A549 (cell line): ENCODE measurements at regions of chr10 and their contacts with region 1.

Region 1: GRCh38 chr10:33008499-33009243 is 50.6 kb upstream of the ITGB1 start:
- DNase-seq: peak in 1 of 2 experiments; percentile 94
- ATAC-seq: peak; percentile 7 to 21; a peak in 5 of 6 replicates
- H3K4me3 ChIP-seq: no peak overlapping the region
- H3K27ac ChIP-seq: peak overlapping the region; percentile 98 to 99
- H3K4me1 ChIP-seq: peaks cover 73% of the 10 kb centered on the region
- CTCF ChIP-seq: peak; percentile 98
- EP300 ChIP-seq: peak; percentile 76 to 77; a peak in 2 of 5 replicates
- POLR2A ChIP-seq: no peak
- RAD21 ChIP-seq: peak; percentile 99

Region 2: DNA sequence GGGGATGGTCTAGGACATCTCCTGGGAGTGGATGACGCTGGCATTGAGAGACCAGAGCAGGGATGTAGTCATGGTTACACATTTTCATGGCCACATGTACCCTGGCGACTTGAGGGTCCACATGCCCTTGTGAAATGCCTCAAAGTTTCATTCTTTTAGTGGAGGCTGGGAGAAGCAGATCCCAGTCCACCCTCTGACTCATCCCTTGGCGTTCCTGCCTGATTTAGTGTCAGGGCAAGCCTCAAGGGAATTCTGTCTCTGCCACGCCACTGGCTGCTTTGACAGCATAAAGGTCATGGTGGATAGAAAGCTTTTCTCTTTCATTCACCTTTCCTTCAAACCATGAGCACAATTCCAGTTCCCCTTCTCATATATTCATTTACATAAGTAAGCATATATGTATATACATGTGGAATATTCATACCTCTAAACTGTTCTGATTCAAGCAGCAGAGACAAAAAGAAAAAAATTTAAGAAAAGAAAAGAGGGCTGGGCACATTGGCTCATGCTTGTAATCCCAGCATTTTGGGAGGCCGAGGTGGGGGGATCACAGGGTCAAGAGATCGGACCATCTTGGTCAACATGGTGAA is 930.7 kb before region 1 on chr10:
- CTCF ChIA-PET with region 1: no interaction called
- POLR2A ChIA-PET with region 1: no interaction called
- DNase-seq: peak in 1 of 2 experiments; percentile 28
- ATAC-seq: peak; percentile 78 to 80; a peak in 5 of 6 replicates
- H3K4me3 ChIP-seq: no peak overlapping the region
- H3K27ac ChIP-seq: peak overlapping the region in 1 of 2 experiments; percentile 25; a peak in 2 of 6 replicates
- H3K4me1 ChIP-seq: peaks cover 13% of the 10 kb centered on the region
- CTCF ChIP-seq: no peak
- EP300 ChIP-seq: no peak
- POLR2A ChIP-seq: no peak
- RAD21 ChIP-seq: no peak

Region 3: DNA sequence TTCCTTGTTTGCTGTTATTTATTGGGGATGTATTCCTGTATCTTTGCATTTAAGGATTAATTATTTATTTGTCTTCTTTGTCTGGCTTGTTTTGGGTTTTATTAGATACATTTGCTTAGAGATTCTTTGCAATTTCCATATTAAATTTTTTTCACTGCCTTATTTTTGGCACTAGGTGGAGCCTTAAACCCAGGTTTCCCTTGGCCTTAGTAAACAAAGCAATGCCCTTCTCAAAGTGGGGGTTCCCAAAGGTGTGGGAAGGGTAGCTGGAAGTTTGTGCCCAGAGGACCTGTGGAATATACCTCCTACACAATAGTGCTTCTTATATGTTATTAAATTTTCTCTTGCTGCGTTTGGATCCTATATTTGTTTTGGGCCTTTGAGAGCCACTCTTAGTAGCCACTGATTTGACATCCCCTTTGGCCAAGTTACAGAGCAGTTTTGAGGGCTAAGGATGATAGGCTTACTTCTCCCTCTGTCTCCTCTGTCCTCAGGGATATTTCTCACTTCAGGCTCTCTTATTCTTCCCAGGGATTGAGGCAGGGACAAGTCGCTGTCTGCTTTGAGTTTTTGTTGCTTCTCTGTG is 213.0 kb before region 1 on chr10:
- CTCF ChIA-PET with region 1: interaction called, 23 read pairs
- POLR2A ChIA-PET with region 1: no interaction called
- DNase-seq: peak; percentile 24 to 45
- ATAC-seq: peak; percentile 71 to 78
- H3K4me3 ChIP-seq: no peak overlapping the region
- H3K27ac ChIP-seq: peak overlapping the region; percentile 55 to 83
- H3K4me1 ChIP-seq: peaks cover 8% of the 10 kb centered on the region
- CTCF ChIP-seq: peak; percentile 93
- EP300 ChIP-seq: no peak
- POLR2A ChIP-seq: no peak
- RAD21 ChIP-seq: peak; percentile 97 to 99

Region 4: DNA sequence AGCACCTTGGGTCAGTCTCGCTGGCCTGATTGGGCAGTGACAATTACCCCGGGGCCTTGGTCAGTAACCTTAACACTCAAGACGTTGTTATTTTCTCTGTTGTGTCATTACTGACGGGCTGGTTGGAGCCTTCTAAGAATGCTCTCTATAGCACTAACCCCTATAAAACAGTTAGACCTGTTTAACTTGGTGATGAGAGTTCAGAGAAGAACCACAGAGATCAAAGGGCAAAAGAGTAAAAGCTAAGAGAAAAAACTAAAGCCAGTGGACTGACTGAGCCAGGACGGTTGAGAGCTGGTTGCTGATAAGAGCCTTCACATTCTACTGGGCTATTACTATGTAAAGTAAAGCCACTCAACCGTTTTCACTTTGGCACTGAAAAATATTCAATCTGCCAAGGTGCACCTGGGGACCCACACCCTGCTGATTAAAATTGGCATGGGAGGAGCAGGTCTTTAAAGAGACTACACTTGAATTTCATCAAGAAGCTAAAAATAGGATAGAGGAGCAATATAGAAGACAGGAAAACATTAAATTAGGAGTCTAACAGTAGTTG is 37.1 kb before region 1 on chr10:
- CTCF ChIA-PET with region 1: interaction called, 168 read pairs
- POLR2A ChIA-PET with region 1: interaction called, 4 read pairs
- DNase-seq: peak in 1 of 2 experiments; percentile 73
- ATAC-seq: peak; percentile 71 to 79
- H3K4me3 ChIP-seq: no peak overlapping the region; the same call in 2 of the 3 replicates
- H3K27ac ChIP-seq: peak overlapping the region; percentile 89 to 94
- H3K4me1 ChIP-seq: peaks cover 59% of the 10 kb centered on the region
- CTCF ChIP-seq: no peak
- EP300 ChIP-seq: no peak
- POLR2A ChIP-seq: no peak
- RAD21 ChIP-seq: no peak

Region 5: DNA sequence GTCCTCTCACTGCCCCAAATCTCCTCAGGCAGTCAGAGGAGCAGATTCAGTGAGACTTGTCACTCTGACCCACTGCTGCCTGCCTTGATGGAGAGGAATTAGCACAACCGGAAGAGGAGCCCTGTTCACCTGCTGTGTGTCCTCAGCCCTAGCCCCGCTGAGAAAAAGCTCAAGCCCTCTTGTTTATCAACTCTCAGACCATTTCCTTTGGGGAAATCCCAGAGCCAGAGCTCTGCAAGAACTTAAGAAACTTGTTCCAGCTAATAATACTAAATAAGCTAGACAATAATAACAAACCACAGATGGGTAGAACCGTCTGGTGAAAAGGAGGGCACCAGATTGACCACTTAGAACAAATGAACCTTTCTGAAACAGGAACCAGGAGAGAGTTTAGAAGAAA is 12.9 kb before region 1 on chr10:
- CTCF ChIA-PET with region 1: interaction called, 11 read pairs
- POLR2A ChIA-PET with region 1: interaction called, 3 read pairs
- DNase-seq: no peak
- ATAC-seq: peak in 1 of 2 experiments; percentile 23; a peak in 4 of 6 replicates
- H3K4me3 ChIP-seq: no peak overlapping the region
- H3K27ac ChIP-seq: peak overlapping the region; percentile 84 to 99
- H3K4me1 ChIP-seq: peaks cover 53% of the 10 kb centered on the region
- CTCF ChIP-seq: no peak
- EP300 ChIP-seq: no peak
- POLR2A ChIP-seq: no peak
- RAD21 ChIP-seq: no peak

Region 6: DNA sequence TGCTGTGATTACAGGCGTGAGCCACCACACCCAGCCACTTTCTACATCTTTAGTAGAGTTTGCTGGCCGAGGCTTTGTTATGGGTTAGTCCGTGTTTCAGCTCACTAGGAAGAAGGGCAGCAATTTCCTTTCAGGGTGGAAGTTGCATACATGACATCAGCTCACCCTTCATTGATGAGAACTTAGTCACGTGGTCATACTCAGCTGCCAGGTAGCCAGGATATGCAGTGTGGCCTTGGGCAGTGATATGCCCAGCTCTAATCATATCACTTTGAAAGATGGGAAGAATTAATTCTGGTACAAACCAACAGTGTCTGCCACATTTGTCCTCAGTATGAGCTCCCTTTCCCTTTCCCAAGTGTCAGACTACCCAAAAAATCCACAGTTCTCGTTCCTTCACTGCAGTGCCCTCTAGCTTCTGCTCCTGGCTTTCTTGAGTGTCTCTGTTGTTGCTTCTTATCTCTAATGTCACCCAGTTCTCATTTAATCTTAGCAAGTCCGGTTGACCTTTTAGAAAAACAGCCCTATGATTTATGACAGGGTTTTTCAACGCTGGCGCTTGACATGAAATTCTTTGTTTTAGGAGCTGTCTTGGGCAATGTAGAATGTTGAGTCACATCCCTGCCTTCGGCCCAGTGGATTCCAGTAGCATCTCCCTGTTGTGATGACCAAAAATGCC is 58.0 kb after region 1 on chr10:
- CTCF ChIA-PET with region 1: interaction called, 13 read pairs
- POLR2A ChIA-PET with region 1: interaction called, 23 read pairs
- DNase-seq: peak; percentile 29 to 88
- ATAC-seq: peak; percentile 87 to 90
- H3K4me3 ChIP-seq: no peak overlapping the region
- H3K27ac ChIP-seq: peak overlapping the region; percentile 69 to 84
- H3K4me1 ChIP-seq: peaks cover 33% of the 10 kb centered on the region
- CTCF ChIP-seq: peak; percentile 61
- EP300 ChIP-seq: peak; percentile 63 to 90; a peak in 4 of 5 replicates
- POLR2A ChIP-seq: no peak
- RAD21 ChIP-seq: peak; percentile 64 to 65

Region 7: DNA sequence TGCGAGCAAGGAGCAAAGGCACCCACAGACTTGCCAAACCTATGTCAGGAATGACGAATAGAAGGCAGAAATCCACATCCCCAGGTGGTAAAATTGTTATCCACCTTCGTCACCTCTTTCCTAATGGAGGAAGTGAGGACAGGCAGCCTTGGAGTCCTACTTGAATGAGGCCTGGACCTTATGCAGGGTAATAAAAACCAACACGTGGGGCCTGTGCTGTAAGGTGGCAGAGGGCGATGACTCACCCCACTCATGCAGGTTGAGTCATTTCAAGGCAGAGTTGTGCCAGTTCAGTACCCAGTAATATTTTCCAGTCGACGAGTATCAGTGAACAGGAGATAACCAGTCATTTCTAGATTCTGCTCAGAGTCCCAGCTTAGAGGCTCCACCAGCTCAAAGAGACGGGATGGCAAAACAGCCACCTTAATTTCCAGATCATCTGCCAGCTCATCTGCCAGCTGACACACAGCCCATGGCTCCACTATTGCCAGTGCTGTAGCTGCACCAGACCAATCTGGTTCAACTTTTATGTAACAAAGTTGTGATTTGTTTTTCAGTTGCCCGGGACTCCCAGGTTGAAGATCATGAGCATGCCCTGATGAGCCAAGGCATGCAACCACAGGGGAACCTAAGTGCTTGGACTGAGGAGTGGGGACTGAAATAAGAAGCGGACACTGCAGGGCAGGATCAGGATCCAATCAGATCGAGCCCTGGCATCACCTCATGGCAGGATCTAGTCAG is 125.5 kb after region 1 on chr10:
- CTCF ChIA-PET with region 1: interaction called, 82 read pairs
- POLR2A ChIA-PET with region 1: interaction called, 10 read pairs
- DNase-seq: peak; percentile 78 to 97
- ATAC-seq: peak; percentile 83 to 92
- H3K4me3 ChIP-seq: no peak overlapping the region
- H3K27ac ChIP-seq: peak overlapping the region; percentile 84 to 95
- H3K4me1 ChIP-seq: peaks cover 74% of the 10 kb centered on the region
- CTCF ChIP-seq: no peak
- EP300 ChIP-seq: peak; percentile 97 to 98; a peak in 4 of 5 replicates
- POLR2A ChIP-seq: no peak
- RAD21 ChIP-seq: peak; percentile 27 to 61; a peak in 4 of 5 replicates

Region 8: DNA sequence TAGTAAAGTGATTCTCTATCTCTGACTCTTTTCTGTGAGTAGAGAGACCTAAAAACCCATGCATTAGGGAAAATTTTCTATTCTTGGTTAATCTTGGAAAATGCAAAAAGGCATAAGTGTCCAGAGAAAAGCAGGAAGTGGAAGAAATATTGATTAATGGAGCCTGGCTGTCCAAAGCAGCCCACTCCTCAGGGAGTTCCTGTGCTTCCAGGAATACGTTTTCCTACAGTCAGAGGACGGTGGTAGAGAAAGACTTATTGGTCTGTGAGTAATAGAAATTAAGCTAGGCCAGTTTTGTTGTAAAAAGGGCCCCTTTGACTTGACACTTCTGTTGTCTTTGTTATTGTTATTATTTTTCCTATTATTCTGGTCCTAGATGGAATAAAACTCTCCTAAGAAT is 168.0 kb after region 1 on chr10:
- CTCF ChIA-PET with region 1: no interaction called
- POLR2A ChIA-PET with region 1: no interaction called
- DNase-seq: no peak
- ATAC-seq: no peak
- H3K4me3 ChIP-seq: no peak overlapping the region
- H3K27ac ChIP-seq: no peak overlapping the region
- H3K4me1 ChIP-seq: peaks cover 44% of the 10 kb centered on the region
- CTCF ChIP-seq: no peak
- EP300 ChIP-seq: no peak
- POLR2A ChIP-seq: no peak
- RAD21 ChIP-seq: no peak

Region 9: GRCh38 chr10:33193057-33193700 is 184.5 kb after region 1 on chr10:
- CTCF ChIA-PET with region 1: interaction called, 12 read pairs
- POLR2A ChIA-PET with region 1: interaction called, 4 read pairs
- DNase-seq: peak; percentile 75 to 93
- ATAC-seq: peak; percentile 78 to 80
- H3K4me3 ChIP-seq: no peak overlapping the region
- H3K27ac ChIP-seq: peak overlapping the region; percentile 79 to 86
- H3K4me1 ChIP-seq: peaks cover 57% of the 10 kb centered on the region
- CTCF ChIP-seq: peak; percentile 93
- EP300 ChIP-seq: no peak
- POLR2A ChIP-seq: no peak
- RAD21 ChIP-seq: peak; percentile 94 to 95